ENCODE measurements at regions of chr17 and their contacts with region 1.

Region 1: GRCh38 chr17:74961657-74962490 is 10.7 kb downstream of the HID1 start:
- DNase-seq: peak; percentile 90

Region 2: GRCh38 chr17:74923533-74924249 is 38.2 kb before region 1 on chr17:
- CTCF ChIA-PET with region 1: interaction called, 23 read pairs
- POLR2A ChIA-PET with region 1: interaction called, 3 read pairs
- DNase-seq: peak; percentile 95

Region 3: DNA sequence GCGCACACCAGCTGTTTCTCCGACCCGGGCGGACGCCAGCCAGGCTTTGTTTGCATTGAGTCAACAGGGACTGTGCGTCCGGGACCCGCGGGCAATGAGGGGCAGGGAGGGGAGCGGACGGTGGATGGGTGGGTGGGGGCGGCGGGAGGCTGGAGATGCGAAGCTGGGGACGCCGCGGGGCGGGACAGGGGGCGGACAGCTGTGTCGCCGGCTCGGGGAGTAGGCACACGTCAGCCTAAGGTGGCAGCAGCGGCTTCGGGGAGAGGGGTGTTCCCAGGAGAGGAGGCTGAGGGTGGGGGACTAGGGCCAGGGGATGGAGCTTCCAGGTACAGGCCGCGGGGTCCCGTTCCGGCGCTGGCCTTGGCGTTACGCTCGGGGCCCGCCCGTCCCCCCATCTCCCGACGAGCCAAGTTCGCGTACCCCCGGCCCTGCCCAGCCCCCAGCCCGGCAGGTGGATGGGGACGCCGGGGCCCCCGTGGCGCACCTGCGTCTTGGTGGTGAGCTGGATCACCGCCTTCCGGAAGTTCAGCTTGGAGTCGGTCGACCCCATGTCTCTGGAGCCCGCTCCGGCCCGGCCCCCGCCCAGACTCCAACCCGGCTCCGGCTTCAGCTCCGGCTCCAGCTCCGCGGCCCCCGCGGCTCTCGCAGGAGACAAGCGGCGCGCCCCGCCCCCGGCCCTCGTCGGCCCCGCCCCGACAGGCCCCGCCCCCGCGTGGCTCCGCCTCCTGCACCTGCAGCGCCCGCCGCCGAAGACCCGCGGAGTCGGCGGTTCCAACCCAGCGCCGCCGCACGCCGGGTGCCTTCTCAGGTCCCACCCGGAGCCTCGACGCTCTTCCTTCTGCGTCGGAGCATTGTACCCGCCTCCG is 10.5 kb after region 1 on chr17 and contains the start of gene HID1:
- CTCF ChIA-PET with region 1: interaction called, 40 read pairs
- POLR2A ChIA-PET with region 1: interaction called, 3 read pairs
- DNase-seq: peak; percentile 93

Region 4: GRCh38 chr17:74987418-74987908 is 25.6 kb after region 1 on chr17 and contains the start of gene CDR2L:
- CTCF ChIA-PET with region 1: interaction called, 10 read pairs
- POLR2A ChIA-PET with region 1: interaction called, 18 read pairs
- DNase-seq: peak; percentile 97

Region 5: DNA sequence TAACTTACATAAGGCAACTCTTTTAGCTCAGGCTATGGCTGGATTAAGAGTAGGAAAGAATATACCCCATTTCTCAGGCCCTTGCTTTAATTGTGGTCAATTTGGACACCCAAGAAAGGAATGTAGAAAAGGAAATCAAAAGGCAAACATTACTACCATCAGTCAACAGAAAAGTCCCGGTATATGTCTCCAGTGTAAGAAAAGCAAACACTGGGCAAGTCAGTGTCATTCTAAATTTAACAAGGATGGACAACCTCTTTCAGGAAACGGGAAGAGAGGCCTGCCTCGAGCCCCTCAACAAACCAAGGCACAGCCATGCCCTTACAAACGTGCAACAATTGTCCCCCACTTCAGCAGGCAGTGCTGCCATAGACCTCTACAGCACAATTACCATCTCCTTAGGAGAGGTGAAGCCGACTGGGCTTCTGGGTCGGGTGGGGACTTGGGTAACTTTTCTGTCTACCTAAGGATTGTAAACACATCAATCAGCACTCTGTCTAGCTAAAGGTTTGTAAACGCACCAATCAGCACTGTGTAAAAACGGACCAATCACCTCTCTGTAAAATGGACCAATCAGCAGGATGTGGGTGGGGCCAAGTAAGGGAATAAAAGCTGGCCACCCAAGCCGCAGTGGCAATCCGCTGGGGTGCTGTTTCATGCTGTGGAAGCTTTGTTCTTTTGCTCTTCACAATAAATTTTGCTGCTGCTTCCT is 63.0 kb after region 1 on chr17:
- CTCF ChIA-PET with region 1: interaction called, 19 read pairs
- POLR2A ChIA-PET with region 1: no interaction called
- DNase-seq: no peak

Region 6: GRCh38 chr17:75109407-75110233 is 147.7 kb after region 1 on chr17 and contains the start of gene ARMC7:
- CTCF ChIA-PET with region 1: interaction called, 10 read pairs
- POLR2A ChIA-PET with region 1: interaction called, 7 read pairs
- DNase-seq: peak; percentile 95

Measured in HEK293T (cell line).